Left colon (tissue), 2 donors: ENCODE measurements at regions of chr4 and their contacts with region 1.

Region 1: GRCh38 chr4:121096629-121097028 is 24.3 kb upstream of the NDNF start:
- DNase-seq: no peak
- ATAC-seq: no peak

Region 2: GRCh38 chr4:120156120-120156718 is 940.4 kb before region 1 on chr4:
- intact Hi-C with region 1: loop called in 1 of 2 experiments (anchors 5 kb)
- DNase-seq: no peak
- ATAC-seq: peak; percentile 51

Region 3: GRCh38 chr4:120718979-120719566 is 377.6 kb before region 1 on chr4:
- intact Hi-C with region 1: loop called in 1 of 2 experiments (anchors 10 kb)
- DNase-seq: peak; percentile 9 to 29
- ATAC-seq: peak; percentile 88